Left lung (tissue), 14 donors: ENCODE measurements at regions of chr19 and their contacts with region 1.

Region 1: GRCh38 chr19:5585461-5586299 is 17.9 kb upstream of the TINCR start:
- DNase-seq: peak in 1 of 4 donors; percentile 39
- ATAC-seq: peak; percentile 13
- H3K4me3 ChIP-seq: no peak overlapping the region
- H3K27ac ChIP-seq: no peak overlapping the region
- H3K4me1 ChIP-seq: no peaks in the 10 kb centered on the region
- H3K27me3 ChIP-seq: no peaks in the 10 kb centered on the region
- CTCF ChIP-seq: no peak

Region 2: GRCh38 chr19:5048091-5048726 is 537.5 kb before region 1 on chr19:
- intact Hi-C with region 1: loop called in 1 of 2 experiments (anchors 10 kb)
- DNase-seq: peak; percentile 62 to 92 (median 78)
- ATAC-seq: peak; percentile 91
- H3K4me3 ChIP-seq: no peak overlapping the region
- H3K27ac ChIP-seq: no peak overlapping the region
- H3K4me1 ChIP-seq: peaks cover 6 to 25% of the 10 kb centered on the region in 2 donors
- H3K27me3 ChIP-seq: no peaks in the 10 kb centered on the region
- CTCF ChIP-seq: peak; percentile 92 to 97

Region 3: GRCh38 chr19:5727453-5728050 is 141.9 kb after region 1 on chr19:
- intact Hi-C with region 1: no loop called
- DNase-seq: no peak
- ATAC-seq: no peak
- H3K4me3 ChIP-seq: no peak overlapping the region
- H3K27ac ChIP-seq: no peak overlapping the region
- H3K4me1 ChIP-seq: no peaks in the 10 kb centered on the region
- H3K27me3 ChIP-seq: no peaks in the 10 kb centered on the region
- CTCF ChIP-seq: no peak